ENCODE measurements at regions of chr14 and their contacts with region 1.

Region 1: DNA sequence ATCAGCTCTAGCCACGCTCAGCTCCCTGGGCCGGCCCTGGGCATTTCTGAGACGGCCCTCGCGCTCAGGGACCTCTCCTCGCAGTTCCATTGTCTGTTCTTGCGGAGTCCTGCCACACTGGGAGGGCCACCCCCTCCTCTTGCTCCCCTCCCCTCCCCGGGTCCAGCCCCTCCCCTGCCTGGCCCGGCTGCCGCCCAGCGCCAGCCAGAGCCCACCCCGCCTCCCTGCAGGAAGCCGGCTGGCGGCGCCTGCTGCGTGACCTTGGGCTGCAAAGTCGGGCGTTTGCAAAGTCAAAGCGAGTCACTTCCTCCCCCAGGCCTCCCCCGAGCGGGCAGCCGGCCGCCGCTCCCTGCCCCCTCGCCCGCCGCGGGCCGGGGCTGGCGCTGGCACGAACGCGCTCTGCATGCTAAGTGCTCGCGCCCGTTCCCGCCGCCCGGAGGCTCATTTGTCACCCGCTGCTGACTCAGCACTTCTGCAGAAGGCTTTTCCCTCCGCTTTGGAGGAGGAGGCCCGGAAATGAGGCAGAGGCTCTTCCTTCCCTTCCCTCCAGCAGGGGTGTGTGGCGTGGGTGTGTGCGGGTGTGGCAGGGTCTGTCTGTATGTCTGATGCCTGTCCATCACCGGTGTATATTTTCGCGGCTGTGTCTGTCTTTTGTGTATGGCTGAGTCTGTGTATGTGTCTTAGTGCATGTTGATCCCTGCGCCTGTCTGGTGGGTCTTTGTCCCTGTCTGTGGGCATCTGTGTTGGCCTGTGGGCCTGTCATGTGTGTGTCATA is 72.0 kb downstream of the IRF2BPL start:
- DNase-seq: peak; percentile 98

Region 2: GRCh38 chr14:76985540-76986230 is 29.2 kb after region 1 on chr14:
- intact Hi-C with region 1: no loop called
- DNase-seq: no peak

Region 3: DNA sequence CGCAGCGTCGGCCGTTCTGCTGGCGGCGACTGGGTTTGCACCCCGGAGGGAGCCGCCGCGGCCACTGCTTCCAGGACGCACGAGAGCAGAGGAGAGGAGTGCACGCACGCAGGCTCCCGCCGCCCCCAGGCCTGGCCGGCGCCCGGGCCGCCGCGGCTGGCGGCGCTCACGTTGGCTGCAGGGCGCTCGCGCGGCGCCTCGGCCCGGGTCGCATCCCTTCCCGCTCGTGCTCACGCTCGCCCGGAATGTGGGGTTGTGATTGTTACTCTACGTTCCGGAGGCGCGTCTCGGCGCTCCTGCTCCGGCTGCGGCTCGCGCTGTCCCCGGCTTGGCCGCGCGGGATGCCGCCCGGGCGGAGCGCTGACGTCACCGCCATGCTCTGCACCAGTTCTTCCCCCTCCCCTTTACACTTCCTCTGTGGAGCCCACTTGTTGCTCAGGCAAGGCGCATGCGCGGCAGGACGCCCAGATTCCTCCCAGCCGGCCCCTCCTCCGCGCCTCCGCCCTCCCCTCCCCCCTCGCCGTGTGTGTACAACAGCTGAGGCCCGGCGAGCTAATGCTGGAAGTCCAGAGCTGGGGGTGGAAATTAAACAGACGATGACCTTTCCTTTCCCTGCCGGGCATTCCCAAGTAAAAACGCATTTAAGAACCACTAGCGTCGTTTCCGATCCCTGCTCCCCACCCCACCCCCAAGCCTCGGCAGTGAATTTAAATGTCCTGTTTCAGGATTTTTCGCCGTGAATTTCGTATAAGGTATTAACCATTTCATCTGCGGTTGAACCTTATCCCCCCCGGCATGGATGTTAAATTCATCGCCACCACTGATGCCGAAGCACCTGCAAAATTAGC is 72.1 kb after region 1 on chr14 and contains the start of gene IRF2BPL:
- intact Hi-C with region 1: loop called in 1 of 2 experiments (anchors 2 kb)
- DNase-seq: peak; percentile 100
- total RNA-seq, gene IRF2BPL: 35.7 to 43.3 TPM

Measured in posterior vena cava (tissue), 2 donors.